Activated B cell treated with CpG ODN at 0.5 μM for 24 hours (primary cell): ENCODE measurements at regions of chr12 and their contacts with region 1.

Region 1: DNA sequence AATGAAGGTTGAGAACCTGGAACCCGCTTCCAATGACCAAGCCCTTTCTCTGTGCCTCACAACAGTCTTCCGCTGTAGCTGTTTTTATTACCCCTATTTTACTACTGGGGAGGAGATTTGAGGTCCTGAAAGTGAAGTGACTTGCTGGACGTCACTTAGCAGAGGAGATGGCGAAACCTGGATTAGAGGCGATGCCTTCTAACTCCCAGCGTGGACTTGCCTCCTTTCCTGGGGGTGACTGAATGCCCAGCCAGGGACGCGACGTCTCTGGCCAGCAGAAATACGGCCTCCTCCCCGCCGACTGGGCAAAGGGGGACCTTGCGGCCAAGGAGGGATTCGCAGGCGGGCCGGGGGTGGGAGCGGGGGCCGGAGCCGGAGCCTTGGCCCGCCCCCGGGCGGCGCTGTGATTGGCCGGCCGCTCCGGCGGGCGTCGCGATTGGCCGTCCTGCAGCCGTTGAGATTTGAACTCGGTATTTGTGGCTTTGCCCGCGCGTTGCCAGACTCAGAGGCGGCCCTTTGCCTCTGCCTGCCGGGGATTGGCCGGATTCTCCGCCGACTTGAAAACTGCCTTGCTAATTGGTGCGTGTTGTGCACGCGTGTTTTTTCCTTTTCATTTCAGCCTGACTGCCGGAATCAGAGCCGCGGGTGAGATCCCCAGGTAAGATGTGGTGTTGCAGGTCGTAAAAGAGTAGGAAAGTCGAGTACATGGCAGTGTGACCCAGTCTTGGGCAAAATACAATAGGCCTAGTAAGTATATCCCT is at the start of gene NCAPD2:
- DNase-seq: peak; percentile 85
- ATAC-seq: peak; percentile 85
- H3K4me3 Mint-ChIP-seq: peak within 1 kb of the TSS; percentile 97
- H3K27ac Mint-ChIP-seq: peak within 1 kb of the TSS; percentile 96
- H3K4me1 Mint-ChIP-seq: peaks cover 28% of the 10 kb centered on the region
- H3K27me3 Mint-ChIP-seq: no peaks in the 10 kb centered on the region
- CTCF ChIP-seq: no peak
- total RNA-seq, gene NCAPD2: 38.4 and 40.9 TPM in 2 replicates

Region 2: GRCh38 chr12:6451348-6452244 is 42.1 kb before region 1 on chr12 and contains the start of gene TAPBPL:
- CTCF ChIA-PET with region 1: no interaction called
- POLR2A ChIA-PET with region 1: interaction called, 22 read pairs
- intact Hi-C with region 1: loop called (anchors 1 kb)
- DNase-seq: peak; percentile 62
- ATAC-seq: peak; percentile 86
- H3K4me3 Mint-ChIP-seq: peak within 1 kb of the TSS; percentile 97
- H3K27ac Mint-ChIP-seq: peak within 1 kb of the TSS; percentile 99
- H3K4me1 Mint-ChIP-seq: peaks cover 58% of the 10 kb centered on the region
- H3K27me3 Mint-ChIP-seq: no peaks in the 10 kb centered on the region
- CTCF ChIP-seq: no peak
- total RNA-seq, gene TAPBPL: 52.5 and 64.0 TPM in 2 replicates

Region 3: DNA sequence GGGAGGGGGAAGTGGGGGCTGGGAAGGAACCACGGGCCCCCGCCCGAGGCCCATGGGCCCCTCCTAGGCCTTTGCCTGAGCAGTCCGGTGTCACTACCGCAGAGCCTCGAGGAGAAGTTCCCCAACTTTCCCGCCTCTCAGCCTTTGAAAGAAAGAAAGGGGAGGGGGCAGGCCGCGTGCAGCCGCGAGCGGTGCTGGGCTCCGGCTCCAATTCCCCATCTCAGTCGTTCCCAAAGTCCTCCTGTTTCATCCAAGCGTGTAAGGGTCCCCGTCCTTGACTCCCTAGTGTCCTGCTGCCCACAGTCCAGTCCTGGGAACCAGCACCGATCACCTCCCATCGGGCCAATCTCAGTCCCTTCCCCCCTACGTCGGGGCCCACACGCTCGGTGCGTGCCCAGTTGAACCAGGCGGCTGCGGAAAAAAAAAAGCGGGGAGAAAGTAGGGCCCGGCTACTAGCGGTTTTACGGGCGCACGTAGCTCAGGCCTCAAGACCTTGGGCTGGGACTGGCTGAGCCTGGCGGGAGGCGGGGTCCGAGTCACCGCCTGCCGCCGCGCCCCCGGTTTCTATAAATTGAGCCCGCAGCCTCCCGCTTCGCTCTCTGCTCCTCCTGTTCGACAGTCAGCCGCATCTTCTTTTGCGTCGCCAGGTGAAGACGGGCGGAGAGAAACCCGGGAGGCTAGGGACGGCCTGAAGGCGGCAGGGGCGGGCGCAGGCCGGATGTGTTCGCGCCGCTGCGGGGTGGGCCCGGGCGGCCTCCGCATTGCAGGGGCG is 40.4 kb after region 1 on chr12 and contains the start of gene GAPDH:
- CTCF ChIA-PET with region 1: interaction called, 11 read pairs
- POLR2A ChIA-PET with region 1: interaction called, 33 read pairs
- intact Hi-C with region 1: loop called (anchors 1 kb)
- DNase-seq: peak; percentile 75
- ATAC-seq: peak; percentile 70
- H3K4me3 Mint-ChIP-seq: peak within 1 kb of the TSS; percentile 94
- H3K27ac Mint-ChIP-seq: peak within 1 kb of the TSS; percentile 93
- H3K4me1 Mint-ChIP-seq: peaks cover 47% of the 10 kb centered on the region
- H3K27me3 Mint-ChIP-seq: no peaks in the 10 kb centered on the region
- CTCF ChIP-seq: no peak
- total RNA-seq, gene GAPDH: 1,003 and 1,033 TPM in 2 replicates

Region 4: DNA sequence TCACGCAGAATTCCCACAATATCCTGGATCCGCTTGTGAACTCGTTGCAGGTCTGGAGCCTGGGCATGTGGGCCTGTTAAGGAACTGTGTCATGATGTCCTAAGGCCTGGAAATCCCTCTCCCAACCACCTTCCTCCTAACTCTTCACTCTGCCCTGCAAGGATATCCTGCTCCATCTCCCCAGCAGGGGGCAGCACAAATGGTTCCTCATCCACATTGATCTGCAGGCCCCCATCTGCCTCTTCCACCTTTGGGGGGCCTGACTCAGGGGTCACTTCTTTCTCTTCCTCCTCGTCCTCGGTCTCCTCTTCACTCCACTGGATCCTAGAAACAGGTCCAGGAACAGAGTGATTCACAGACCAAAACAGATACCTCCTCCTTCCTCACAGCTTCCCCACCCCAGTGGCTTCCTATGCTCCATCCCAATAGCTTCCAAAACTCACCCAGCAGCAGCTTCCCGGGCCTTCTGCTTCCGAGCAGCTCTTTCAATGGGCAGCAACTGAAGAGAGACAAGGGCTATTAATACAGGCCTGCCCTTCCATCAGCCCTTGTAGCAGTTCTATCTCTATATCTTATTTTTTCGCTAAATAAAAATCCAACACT is 69.9 kb after region 1 on chr12:
- CTCF ChIA-PET with region 1: no interaction called
- POLR2A ChIA-PET with region 1: no interaction called
- intact Hi-C with region 1: loop called (anchors 1 kb)
- DNase-seq: peak; percentile 57
- ATAC-seq: peak; percentile 25
- H3K4me3 Mint-ChIP-seq: no peak overlapping the region
- H3K27ac Mint-ChIP-seq: no peak overlapping the region
- H3K4me1 Mint-ChIP-seq: peaks cover 29% of the 10 kb centered on the region
- H3K27me3 Mint-ChIP-seq: no peaks in the 10 kb centered on the region
- CTCF ChIP-seq: peak; percentile 57

Region 5: DNA sequence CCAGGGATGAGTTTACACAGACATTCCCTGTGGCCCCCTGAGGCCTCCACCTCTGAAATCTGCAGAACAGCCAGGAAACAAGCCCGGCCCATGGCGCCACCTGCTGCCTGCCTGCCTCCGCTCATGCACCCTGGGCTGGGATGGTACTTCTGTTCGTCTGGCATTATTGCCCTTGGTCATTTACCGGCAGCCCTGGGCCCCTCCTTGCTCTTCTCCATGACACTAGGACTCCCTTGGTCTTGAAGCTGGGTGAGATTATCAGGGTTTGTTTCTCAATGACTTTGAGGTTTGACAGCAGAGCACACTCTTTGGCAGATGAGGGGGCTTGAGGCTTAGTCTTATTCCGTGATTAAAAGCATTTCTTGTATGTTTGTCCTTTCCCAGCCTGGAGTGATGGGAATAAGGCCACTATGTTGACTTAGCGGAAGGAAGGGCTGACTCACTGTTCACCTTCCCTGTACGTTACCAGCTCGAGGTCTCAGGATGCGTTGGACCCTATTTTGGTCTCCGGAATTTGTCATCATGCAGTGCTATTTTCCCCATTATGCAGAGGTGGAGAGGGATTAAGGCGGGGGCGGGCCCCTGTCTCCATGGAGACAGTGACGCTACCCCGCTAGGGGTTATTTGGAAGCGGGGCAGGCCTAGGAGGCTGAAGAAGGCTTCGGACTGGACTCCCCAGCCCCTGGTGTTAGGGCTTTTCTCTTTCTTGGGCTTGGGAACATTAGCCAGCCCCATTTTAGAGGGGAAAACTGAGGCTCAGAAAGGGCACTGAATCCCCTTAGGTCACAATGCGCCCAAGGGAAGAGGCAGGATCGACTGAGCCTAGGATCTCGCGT is 695.1 kb after region 1 on chr12:
- CTCF ChIA-PET with region 1: no interaction called
- POLR2A ChIA-PET with region 1: interaction called, 11 read pairs
- intact Hi-C with region 1: no loop called
- DNase-seq: peak; percentile 46
- ATAC-seq: peak; percentile 39
- H3K4me3 Mint-ChIP-seq: peak overlapping the region; percentile 92
- H3K27ac Mint-ChIP-seq: peak overlapping the region; percentile 91
- H3K4me1 Mint-ChIP-seq: peaks cover 31% of the 10 kb centered on the region
- H3K27me3 Mint-ChIP-seq: no peaks in the 10 kb centered on the region
- CTCF ChIP-seq: no peak